GM18951 (cell line): ENCODE measurements at regions of chr3 and their contacts with region 1.

Region 1: GRCh38 chr3:98018301-98018700 is 16.8 kb downstream of the GABRR3 start:
- POLR2A ChIP-seq: no peak

Region 2: DNA sequence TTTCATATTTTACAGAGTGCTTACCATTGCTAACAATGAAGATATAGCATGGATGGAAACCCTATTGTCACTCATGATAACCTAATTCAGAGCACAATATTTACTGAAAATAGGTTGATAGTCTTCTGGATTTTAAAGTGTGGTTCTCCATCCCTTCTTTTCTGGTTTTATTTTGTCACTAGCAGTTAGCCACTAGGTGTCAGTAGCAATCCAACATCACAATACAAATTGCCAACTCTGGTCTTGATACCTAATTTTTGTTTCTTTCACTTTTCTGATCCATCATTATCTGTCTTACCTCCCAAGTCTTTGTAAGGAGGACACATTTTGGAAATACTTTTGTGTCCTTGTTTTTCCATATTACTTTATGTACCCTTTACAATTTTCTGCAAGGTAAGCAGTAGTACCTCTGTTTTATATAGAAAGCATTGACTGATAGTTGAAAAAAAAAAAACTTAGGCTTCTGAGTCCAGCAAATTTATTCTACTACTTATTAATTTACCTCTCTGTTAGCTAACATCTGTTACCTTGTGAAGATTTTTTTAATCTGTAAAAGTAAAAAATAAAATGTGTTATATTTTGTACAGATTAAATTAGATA is 224.8 kb before region 1 on chr3:
- in situ Hi-C with region 1: loop called (anchors 5 kb)
- POLR2A ChIP-seq: no peak